Activated naive CD4-positive, alpha-beta T cell treated with anti-CD3 and anti-CD28 coated beads for 36 hours (primary cell): ENCODE measurements at regions of chr9 and their contacts with region 1.

Region 1: GRCh38 chr9:3746296-3747275 is 220.8 kb upstream of the RFX3 start:
- DNase-seq: peak; percentile 79
- H3K4me3 Mint-ChIP-seq: no peak overlapping the region
- H3K27ac Mint-ChIP-seq: peak overlapping the region; percentile 71
- H3K4me1 Mint-ChIP-seq: peaks cover 46% of the 10 kb centered on the region
- H3K27me3 Mint-ChIP-seq: peaks cover 5% of the 10 kb centered on the region

Region 2: GRCh38 chr9:3478549-3478953 is 268.0 kb before region 1 on chr9:
- CTCF ChIA-PET with region 1: no interaction called
- intact Hi-C with region 1: loop called (anchors 1 kb)
- DNase-seq: peak; percentile 50
- H3K4me3 Mint-ChIP-seq: peak overlapping the region; percentile 43
- H3K27ac Mint-ChIP-seq: peak overlapping the region; percentile 83
- H3K4me1 Mint-ChIP-seq: peaks cover 72% of the 10 kb centered on the region
- H3K27me3 Mint-ChIP-seq: no peaks in the 10 kb centered on the region

Region 3: DNA sequence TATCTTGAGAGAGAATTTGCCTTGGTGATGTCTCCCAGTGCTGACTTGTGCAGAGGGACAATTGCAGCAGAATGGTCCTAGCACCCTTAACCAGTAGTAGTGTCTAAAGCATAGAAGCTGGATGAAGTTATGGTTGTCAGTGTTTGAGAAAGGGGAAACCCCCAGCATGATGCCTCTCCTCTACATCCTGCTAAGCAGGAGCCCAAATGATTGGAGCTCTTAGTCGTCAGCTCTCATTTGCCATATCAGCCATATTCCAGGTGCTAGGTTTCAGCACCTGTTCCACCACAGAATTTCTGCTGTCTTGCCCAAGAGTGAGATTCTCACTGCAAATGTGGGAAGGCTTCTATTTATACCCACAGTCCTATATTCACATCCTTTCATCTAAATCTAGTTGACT is 177.1 kb before region 1 on chr9:
- CTCF ChIA-PET with region 1: no interaction called
- intact Hi-C with region 1: no loop called
- DNase-seq: peak; percentile 7
- H3K4me3 Mint-ChIP-seq: no peak overlapping the region
- H3K27ac Mint-ChIP-seq: no peak overlapping the region
- H3K4me1 Mint-ChIP-seq: peaks cover 2% of the 10 kb centered on the region
- H3K27me3 Mint-ChIP-seq: no peaks in the 10 kb centered on the region

Region 4: GRCh38 chr9:3931996-3932906 is 185.7 kb after region 1 on chr9:
- CTCF ChIA-PET with region 1: no interaction called
- intact Hi-C with region 1: loop called (anchors 1 kb)
- DNase-seq: no peak
- H3K4me3 Mint-ChIP-seq: no peak overlapping the region
- H3K27ac Mint-ChIP-seq: peak overlapping the region; percentile 73
- H3K4me1 Mint-ChIP-seq: peaks cover 22% of the 10 kb centered on the region
- H3K27me3 Mint-ChIP-seq: peaks cover 2% of the 10 kb centered on the region

Region 5: DNA sequence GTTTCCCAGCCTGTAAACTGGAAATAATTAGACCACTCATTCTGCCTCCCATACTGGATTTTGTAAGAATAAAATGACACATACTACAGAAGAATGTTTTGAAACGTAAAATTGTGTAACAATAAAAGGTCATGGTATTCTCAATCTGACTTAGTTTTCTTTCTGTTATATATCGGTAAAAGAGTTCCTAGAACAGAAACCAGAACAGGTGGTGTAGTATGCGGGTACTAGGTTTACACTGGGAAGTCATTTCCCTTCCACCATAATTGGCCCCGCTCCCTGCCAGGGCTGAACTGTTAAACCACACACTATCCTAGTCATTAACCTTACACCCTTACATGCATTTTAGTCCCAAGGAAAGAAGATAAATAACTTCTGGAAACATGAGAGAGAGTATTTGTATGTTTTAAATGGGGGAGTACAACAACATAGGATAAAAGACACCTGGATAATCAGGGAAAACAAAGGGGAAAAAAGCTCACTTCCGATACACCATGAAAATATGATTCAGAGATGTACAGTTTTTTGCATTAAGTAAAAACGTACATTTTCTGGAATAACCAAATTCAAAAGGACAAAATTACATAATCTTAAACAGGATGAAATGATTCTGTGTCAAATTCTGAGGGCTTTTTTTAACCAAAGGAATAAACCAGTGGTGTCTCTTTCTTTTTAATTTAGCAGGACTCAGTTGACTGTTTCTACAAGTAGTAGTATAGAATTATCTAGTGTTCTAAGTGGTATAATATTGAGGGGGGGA is 353.6 kb after region 1 on chr9:
- CTCF ChIA-PET with region 1: interaction called, 3 read pairs
- intact Hi-C with region 1: loop called (anchors 2 kb)
- DNase-seq: peak; percentile 47
- H3K4me3 Mint-ChIP-seq: no peak overlapping the region
- H3K27ac Mint-ChIP-seq: no peak overlapping the region
- H3K4me1 Mint-ChIP-seq: peaks cover 13% of the 10 kb centered on the region
- H3K27me3 Mint-ChIP-seq: no peaks in the 10 kb centered on the region

Region 6: DNA sequence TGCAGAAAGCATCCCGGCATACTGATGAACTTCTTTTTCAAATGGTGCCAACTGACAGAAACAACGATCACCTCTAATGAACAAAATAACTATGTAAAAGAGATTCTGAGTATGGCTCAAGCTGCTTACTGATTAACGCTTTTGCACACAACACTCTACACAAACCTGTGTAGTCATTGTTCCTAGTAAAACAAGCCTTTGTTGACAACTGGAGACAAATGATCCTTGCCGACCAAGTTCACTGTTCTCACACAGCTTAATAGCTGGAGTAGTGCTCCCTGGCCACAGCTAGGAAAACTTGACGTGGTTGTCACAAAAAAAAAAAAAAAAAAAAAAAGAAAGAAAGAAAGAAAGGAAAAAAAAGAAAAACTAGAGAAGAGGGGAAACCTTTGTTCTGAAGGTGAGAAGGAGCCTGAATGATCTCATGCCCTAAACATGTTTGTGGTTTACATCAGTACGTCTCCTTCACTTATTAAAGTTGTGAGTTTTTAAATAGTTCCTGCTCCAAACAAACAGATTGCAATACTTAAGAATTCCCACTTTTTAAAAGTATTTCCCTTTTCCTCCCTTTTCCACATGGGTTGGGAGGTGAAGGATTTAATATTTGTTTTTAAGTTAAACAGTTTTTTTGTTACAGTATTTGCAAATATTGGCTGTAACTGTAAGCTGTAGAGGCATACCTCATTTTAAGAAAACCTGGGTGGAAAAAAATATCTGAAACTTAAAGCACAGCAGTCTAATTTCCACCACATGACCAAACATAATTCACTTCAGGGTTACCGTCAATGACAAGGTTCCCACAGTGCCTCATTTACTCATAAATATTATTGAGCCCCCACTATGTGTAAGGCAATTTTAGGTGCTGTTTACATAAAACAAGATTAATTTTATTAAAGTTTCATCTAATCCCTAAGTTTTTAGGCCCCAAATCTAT is 489.6 kb after region 1 on chr9:
- CTCF ChIA-PET with region 1: no interaction called
- intact Hi-C with region 1: loop called (anchors 5 kb)
- DNase-seq: no peak
- H3K4me3 Mint-ChIP-seq: no peak overlapping the region
- H3K27ac Mint-ChIP-seq: no peak overlapping the region
- H3K4me1 Mint-ChIP-seq: peaks cover 23% of the 10 kb centered on the region
- H3K27me3 Mint-ChIP-seq: no peaks in the 10 kb centered on the region

Region 7: DNA sequence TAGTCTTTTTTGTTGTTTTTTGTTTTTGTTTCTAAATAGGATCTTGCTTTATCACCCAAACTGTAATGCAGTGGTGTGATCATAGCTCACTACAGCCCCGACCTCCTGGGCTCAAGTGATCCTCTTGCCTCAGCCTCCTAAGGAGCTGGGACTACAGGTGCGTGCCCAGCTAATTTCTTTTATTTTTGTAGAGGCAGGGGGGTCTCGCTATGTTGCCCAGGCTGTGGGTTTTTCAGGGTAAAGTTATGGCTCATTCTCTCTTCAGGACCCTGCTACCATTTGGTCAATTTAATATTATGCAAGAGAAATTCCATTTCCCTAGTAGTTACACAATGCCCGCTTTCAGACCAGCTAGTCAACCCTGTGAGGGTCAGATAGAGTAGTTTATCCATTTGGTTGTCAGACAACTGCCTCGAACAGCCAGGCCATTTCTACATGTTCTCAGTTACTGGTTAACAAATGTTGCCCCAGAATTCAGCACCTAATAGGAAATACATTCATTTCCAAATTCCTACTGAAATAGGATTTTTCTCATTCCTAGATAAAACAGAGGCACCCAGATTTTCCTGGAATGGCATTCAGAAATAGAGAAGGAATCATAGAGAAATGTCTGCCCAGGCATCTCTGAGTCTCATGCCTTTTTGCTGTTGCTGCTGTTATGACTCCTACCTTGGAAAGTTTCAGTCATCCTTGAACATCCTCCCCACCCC is 559.6 kb after region 1 on chr9:
- CTCF ChIA-PET with region 1: no interaction called
- intact Hi-C with region 1: loop called (anchors 2 kb)
- DNase-seq: peak; percentile 82
- H3K4me3 Mint-ChIP-seq: no peak overlapping the region
- H3K27ac Mint-ChIP-seq: peak overlapping the region; percentile 11
- H3K4me1 Mint-ChIP-seq: peaks cover 55% of the 10 kb centered on the region
- H3K27me3 Mint-ChIP-seq: no peaks in the 10 kb centered on the region

Region 8: DNA sequence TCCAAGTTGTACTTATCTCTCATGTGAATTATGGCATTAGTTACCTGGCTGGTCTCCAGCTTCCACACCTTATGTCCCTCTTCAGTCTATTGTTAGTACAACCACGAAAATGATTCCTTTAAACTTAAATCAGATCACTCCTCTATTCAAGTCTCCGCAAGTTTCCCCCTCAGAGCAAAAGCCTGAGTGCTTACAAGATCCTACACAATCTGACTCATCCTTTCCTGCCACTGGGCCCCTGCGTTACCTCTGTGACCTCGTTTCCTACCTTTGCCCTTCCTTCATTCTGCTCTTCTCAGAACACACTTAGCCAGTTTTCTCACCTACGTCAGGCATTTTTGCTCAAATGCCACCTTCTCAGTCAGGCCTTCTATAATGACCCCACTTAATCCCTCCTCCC is 598.4 kb after region 1 on chr9:
- CTCF ChIA-PET with region 1: no interaction called
- intact Hi-C with region 1: loop called (anchors 1 kb)
- DNase-seq: peak; percentile 82
- H3K4me3 Mint-ChIP-seq: peak overlapping the region; percentile 28
- H3K27ac Mint-ChIP-seq: peak overlapping the region; percentile 43
- H3K4me1 Mint-ChIP-seq: peaks cover 17% of the 10 kb centered on the region
- H3K27me3 Mint-ChIP-seq: no peaks in the 10 kb centered on the region